ENCODE measurements at regions of chr3 and their contacts with region 1.

Region 1: GRCh38 chr3:138051946-138052802 is 42.2 kb downstream of the CLDN18 start:
- DNase-seq: peak; percentile 12
- ATAC-seq: peak; percentile 96
- H3K4me3 ChIP-seq: no peak overlapping the region
- H3K27ac ChIP-seq: no peak overlapping the region
- H3K4me1 ChIP-seq: no peaks in the 10 kb centered on the region
- H3K27me3 ChIP-seq: no peaks in the 10 kb centered on the region
- CTCF ChIP-seq: peak; percentile 51 to 86 (median 79); a peak in 5 of 6 replicates
- POLR2A ChIP-seq: no peak
- RAD21 ChIP-seq: peak; percentile 73

Region 2: DNA sequence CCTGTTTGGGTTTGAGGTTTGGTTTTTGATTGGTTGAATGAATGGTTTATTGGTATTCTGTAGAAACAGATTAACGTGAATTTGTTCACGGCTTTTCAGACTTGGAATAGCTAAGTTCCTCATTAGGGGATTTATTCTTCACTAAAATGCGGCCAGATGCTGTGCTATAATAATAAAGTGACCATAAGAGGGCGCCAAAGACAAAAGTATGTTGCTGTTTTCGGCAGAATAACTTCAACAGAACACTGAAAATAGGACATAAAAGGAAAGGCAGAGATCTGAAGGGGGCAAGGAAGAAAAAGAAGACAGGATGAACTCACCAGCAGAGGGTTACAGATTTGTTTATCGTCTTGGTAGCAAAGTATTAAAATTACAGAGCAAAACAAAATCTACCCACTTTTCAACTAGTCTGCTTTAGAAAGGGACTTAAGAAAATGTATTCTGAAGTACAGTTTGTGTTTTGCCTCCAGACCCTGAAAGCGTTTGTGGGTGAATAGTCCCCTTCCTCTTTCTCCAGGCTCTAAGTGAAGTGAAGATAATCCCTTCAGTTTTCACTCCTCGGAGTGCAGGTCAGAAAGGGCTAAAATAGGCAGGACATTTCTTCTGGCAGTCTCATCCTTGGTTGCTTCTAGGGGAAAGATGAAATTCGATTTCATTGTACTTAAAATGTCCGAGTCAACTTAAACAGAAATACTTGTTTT is 946.7 kb before region 1 on chr3:
- CTCF ChIA-PET with region 1: interaction called, 4 read pairs
- POLR2A ChIA-PET with region 1: no interaction called
- RAD21 ChIA-PET with region 1: no interaction called
- intact Hi-C with region 1: loop called (anchors 5 kb)
- DNase-seq: peak; percentile 52
- ATAC-seq: peak; percentile 82
- H3K4me3 ChIP-seq: no peak overlapping the region
- H3K27ac ChIP-seq: no peak overlapping the region
- H3K4me1 ChIP-seq: no peaks in the 10 kb centered on the region
- H3K27me3 ChIP-seq: peaks cover 37% of the 10 kb centered on the region
- CTCF ChIP-seq: peak; percentile 52 to 85 (median 70); a peak in 5 of 6 replicates
- POLR2A ChIP-seq: no peak
- RAD21 ChIP-seq: peak; percentile 81

Region 3: DNA sequence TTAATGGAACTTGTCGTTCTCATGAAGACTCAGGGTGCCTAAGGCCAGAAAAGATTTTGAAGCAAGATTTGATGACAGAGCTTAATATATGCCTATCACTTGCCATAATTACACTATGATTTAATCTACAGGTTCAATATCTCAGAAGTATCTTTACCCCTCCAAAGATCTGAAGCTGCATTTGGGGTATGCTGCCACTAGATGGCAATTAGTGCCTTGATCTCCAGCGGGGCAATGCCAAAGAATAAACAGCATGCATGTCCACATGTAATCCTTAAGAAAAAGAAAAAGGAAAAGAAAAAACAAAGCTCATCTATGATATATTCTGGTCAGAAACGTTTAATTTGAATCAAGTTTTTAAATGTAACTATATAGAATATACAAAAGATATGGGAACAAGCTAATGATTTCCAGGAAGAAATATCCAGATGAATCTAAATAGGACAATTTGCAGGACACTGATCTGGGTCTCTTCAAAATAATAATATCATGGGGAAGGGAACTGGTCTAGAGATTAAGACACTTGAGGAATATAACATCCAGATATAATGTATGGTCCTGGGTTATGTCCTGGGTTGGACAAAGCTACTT is 343.1 kb before region 1 on chr3:
- CTCF ChIA-PET with region 1: no interaction called
- POLR2A ChIA-PET with region 1: no interaction called
- RAD21 ChIA-PET with region 1: no interaction called
- intact Hi-C with region 1: loop called (anchors 5 kb)
- DNase-seq: peak; percentile 10
- ATAC-seq: peak; percentile 49; the same call in 1 of the 2 replicates
- H3K4me3 ChIP-seq: no peak overlapping the region
- H3K27ac ChIP-seq: no peak overlapping the region
- H3K4me1 ChIP-seq: no peaks in the 10 kb centered on the region
- H3K27me3 ChIP-seq: no peaks in the 10 kb centered on the region
- CTCF ChIP-seq: peak; percentile 53 to 71 (median 70); a peak in 5 of 6 replicates
- POLR2A ChIP-seq: no peak
- RAD21 ChIP-seq: peak; percentile 60

Region 4: GRCh38 chr3:138023754-138024153 is 28.4 kb before region 1 on chr3:
- CTCF ChIA-PET with region 1: no interaction called
- POLR2A ChIA-PET with region 1: no interaction called
- RAD21 ChIA-PET with region 1: no interaction called
- intact Hi-C with region 1: no loop called
- DNase-seq: no peak
- ATAC-seq: no peak
- H3K4me3 ChIP-seq: no peak overlapping the region
- H3K27ac ChIP-seq: no peak overlapping the region
- H3K4me1 ChIP-seq: no peaks in the 10 kb centered on the region
- H3K27me3 ChIP-seq: no peaks in the 10 kb centered on the region
- CTCF ChIP-seq: no peak
- POLR2A ChIP-seq: no peak
- RAD21 ChIP-seq: no peak

Measured in HCT116 (cell line).